Activated T-helper 1 cell treated with anti-CD3 and anti-CD28 coated beads, Interleukin-12 subunit alpha, Interleukin-12 subunit beta, Interleukin-2, Interleukin-4 antibody, amounts not matched to agents 30 ng/mL and 10 ng/mL and 1 ng/mL, durations not matched to agents 14 hours and 24 hours and 36 hours (primary cell): ENCODE measurements at regions of chr19 and their contacts with region 1.

Region 1: DNA sequence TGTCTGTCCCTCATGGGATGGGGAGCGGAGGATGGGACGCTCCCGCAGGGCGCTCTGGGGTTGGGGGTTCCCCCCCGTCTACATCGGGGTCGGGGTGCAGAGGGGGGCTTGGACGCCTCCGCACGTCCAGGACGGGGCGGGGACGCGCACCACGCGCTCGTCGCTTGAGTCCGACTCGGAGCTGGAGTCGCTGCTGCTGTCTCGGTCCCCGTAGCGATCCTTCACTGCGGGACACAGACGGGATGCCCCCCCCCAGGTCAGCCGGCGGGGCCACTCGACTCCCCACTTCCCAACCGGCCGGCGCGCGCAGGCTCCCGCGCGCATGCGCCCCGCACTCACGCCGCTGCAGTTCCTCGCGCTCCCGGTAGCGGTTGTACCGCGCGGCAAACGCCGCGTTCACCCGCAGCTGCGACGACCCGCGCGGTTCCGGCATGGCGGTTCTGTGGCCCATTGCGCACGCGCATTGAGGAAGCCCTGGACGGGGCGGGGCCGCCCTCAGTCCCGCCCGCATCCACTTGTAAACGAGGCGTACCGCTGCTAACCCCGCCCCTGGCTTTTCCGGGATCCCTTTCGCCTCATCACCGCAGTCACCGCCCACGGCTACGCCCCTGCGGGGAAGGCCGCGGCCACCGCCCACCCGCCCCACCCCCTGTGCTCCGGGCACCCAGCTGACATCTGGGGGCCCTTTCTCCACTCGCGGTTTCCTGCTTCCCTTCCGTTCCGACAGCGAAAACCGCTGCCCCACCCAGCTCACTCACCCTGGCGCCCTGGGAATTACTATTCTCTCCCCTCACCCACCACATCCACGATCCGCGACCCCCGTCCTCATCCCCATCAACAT is at the start of gene KRI1:
- DNase-seq: peak; percentile 100
- H3K4me3 Mint-ChIP-seq: peak within 1 kb of the TSS; percentile 95
- H3K27ac Mint-ChIP-seq: peak within 1 kb of the TSS; percentile 96
- H3K4me1 Mint-ChIP-seq: peaks cover 48% of the 10 kb centered on the region
- H3K27me3 Mint-ChIP-seq: no peaks in the 10 kb centered on the region
- total RNA-seq, gene KRI1: 91.1 and 91.8 TPM in 2 replicates

Region 2: GRCh38 chr19:10194500-10195289 is 371.1 kb before region 1 on chr19 and contains the start of gene DNMT1:
- intact Hi-C with region 1: loop called (anchors 5 kb)
- DNase-seq: peak; percentile 97
- H3K4me3 Mint-ChIP-seq: peak within 1 kb of the TSS; percentile 97
- H3K27ac Mint-ChIP-seq: peak within 1 kb of the TSS; percentile 97
- H3K4me1 Mint-ChIP-seq: peaks cover 16% of the 10 kb centered on the region
- H3K27me3 Mint-ChIP-seq: no peaks in the 10 kb centered on the region
- total RNA-seq, gene DNMT1: 411 and 425 TPM in 2 replicates

Region 3: DNA sequence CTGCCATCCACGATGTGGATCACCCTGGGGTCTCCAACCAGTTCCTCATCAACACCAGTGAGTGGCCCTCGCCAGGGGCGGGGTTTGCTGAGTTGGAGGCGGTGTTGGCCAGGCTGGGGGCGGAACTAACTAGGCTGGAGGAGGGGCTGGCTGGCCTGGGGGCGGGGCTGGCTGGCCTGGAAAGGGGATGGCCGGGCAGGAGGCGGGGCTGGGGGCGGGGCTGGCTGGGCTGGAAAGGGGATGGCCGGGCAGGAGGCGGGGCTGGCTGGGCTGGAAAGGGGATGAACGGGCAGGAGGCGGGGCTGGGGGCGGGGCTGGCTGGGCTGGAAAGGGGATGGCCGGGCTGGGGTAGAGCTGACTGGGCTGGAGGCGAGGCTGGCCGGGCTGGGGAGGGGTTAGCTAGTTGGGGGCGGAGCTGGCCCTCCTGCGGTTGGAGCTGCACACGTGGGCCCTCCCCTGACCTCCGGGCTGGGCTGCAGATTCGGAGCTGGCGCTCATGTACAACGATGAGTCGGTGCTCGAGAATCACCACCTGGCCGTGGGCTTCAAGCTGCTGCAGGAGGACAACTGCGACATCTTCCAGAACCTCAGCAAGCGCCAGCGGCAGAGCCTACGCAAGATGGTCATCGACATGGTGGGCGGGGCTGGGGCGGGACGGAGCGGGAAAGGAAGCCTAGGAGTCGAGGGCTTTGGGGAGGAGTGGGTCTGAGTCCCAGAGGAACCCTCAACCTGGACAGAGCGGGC is 104.6 kb before region 1 on chr19:
- intact Hi-C with region 1: loop called (anchors 1 kb)
- DNase-seq: peak; percentile 81
- H3K4me3 Mint-ChIP-seq: no peak overlapping the region
- H3K27ac Mint-ChIP-seq: peak overlapping the region; percentile 29
- H3K4me1 Mint-ChIP-seq: no peaks in the 10 kb centered on the region
- H3K27me3 Mint-ChIP-seq: no peaks in the 10 kb centered on the region

Region 4: GRCh38 chr19:10602330-10603083 is 36.7 kb after region 1 on chr19:
- intact Hi-C with region 1: loop called (anchors 1 kb)
- DNase-seq: peak; percentile 75
- H3K4me3 Mint-ChIP-seq: peak overlapping the region; percentile 99
- H3K27ac Mint-ChIP-seq: peak overlapping the region; percentile 100
- H3K4me1 Mint-ChIP-seq: peaks cover 24% of the 10 kb centered on the region
- H3K27me3 Mint-ChIP-seq: peaks cover 8% of the 10 kb centered on the region

Region 5: DNA sequence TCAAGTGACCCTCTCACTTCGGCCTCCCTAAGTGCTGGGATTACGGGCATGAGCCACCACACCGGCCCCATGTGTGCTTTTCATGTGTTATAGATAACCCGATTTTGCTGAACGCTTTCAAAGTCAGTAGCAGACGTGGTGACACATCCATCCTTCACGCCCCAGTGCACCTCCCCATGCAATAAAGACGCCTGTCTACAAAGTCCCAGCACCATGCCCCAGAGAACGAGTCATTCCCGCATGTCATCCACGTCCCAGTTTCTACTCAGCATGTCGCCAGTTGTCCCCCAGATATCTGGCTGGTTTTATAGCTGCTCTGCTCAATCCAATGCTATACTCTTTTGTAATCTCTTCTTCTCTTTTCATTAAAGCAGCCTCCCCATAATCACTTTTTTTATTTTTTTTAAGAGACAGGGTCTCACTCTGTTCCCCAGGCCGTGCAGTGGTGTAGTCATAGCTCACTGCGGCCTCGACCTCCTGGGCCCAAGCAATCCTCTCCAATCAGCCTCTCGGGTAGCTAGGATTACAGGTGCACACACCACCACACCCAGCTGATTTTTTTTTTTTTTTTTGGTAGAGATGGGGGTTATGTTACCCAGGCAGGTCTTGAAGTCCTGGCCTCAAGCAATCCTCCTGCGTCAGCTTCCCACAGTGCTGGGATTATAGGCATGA is 194.6 kb after region 1 on chr19:
- intact Hi-C with region 1: loop called (anchors 1 kb)
- DNase-seq: no peak
- H3K4me3 Mint-ChIP-seq: peak overlapping the region; percentile 66
- H3K27ac Mint-ChIP-seq: peak overlapping the region; percentile 86
- H3K4me1 Mint-ChIP-seq: peaks cover 78% of the 10 kb centered on the region
- H3K27me3 Mint-ChIP-seq: no peaks in the 10 kb centered on the region

Region 6: GRCh38 chr19:10780368-10780767 is 214.6 kb after region 1 on chr19:
- intact Hi-C with region 1: no loop called
- DNase-seq: no peak
- H3K4me3 Mint-ChIP-seq: no peak overlapping the region
- H3K27ac Mint-ChIP-seq: peak overlapping the region; percentile 42
- H3K4me1 Mint-ChIP-seq: peaks cover 33% of the 10 kb centered on the region
- H3K27me3 Mint-ChIP-seq: no peaks in the 10 kb centered on the region

Region 7: DNA sequence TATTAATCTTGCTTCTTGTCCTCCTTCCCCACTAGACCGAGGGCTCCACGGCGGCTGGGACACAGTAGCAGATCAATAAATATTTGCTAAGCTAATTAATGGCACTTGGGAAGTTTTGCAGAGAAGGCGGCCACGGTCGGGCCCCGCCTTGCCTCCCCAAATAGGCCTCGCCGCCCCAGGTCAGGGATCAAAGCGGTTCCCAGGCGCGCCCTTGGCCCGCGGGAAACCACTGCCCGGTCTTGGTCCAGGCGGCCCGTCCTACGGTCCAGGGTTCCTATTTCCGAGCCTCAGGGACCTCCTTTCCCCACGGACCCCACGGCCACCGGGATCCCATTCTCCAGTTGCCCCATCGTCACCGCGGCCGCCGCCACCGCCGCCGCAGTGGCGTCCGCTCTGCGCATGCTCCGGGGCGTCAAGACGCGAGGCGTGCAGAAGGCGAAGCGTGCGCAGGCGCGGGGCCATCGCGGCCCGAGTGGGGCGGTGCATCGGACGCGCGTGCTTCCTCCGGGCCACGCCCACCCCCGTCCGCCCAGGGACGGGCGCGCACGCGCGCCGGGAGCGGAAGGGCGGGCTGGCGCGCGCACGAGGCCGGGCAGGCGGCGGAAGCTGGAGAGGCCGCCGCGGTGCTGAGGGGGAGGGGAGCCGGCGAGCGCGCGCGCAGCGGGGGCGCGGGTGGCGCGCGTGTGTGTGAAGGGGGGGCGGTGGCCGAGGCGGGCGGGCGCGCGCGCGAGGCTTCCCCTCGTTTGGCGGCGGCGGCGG is 394.7 kb after region 1 on chr19 and contains the start of gene SMARCA4:
- intact Hi-C with region 1: loop called (anchors 2 kb)
- DNase-seq: peak; percentile 99
- H3K4me3 Mint-ChIP-seq: peak within 1 kb of the TSS; percentile 89
- H3K27ac Mint-ChIP-seq: peak within 1 kb of the TSS; percentile 87
- H3K4me1 Mint-ChIP-seq: peaks cover 39% of the 10 kb centered on the region
- H3K27me3 Mint-ChIP-seq: peaks cover under 1% of the 10 kb centered on the region
- total RNA-seq, gene SMARCA4: 177 and 178 TPM in 2 replicates